ENCODE measurements at regions of chr12 and their contacts with region 1.

Region 1: DNA sequence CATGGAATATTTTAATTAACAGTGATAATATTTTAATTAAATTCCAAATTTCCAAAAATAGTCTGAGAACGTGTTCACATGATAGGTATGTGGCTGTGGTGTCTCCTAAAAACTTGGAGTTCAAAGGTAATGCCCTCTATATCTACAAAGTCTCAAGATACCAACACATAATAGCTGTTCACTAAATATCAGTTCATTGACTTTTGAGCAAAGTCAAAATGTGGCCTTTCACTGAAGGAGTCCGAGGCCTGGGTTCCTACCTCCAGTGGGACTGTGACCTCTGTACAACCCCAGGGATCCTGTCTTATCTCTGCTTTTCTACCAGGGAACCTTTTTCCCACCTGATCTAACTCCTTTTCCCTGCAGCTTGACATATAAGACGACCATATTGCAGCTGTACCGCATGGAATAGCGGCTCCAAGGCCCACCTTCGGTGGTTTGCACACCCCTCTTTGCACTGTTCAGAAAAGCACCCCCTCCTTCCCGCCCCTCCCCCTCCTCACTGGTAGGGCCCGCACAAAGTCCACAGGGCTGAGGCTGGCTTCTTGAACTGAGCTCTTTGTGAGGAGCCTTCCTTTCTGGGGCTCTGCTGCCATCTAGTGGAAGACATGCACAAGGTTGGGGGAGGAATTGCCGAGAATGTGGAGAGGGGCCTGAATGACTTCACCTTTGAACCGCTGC is 3.1 kb downstream of the CCND2 start:
- DNase-seq: peak; percentile 95
- H3K4me3 Mint-ChIP-seq: peak overlapping the region; percentile 99
- H3K27ac Mint-ChIP-seq: peak overlapping the region; percentile 99
- H3K4me1 Mint-ChIP-seq: peaks cover 55% of the 10 kb centered on the region
- H3K27me3 Mint-ChIP-seq: no peaks in the 10 kb centered on the region

Region 2: DNA sequence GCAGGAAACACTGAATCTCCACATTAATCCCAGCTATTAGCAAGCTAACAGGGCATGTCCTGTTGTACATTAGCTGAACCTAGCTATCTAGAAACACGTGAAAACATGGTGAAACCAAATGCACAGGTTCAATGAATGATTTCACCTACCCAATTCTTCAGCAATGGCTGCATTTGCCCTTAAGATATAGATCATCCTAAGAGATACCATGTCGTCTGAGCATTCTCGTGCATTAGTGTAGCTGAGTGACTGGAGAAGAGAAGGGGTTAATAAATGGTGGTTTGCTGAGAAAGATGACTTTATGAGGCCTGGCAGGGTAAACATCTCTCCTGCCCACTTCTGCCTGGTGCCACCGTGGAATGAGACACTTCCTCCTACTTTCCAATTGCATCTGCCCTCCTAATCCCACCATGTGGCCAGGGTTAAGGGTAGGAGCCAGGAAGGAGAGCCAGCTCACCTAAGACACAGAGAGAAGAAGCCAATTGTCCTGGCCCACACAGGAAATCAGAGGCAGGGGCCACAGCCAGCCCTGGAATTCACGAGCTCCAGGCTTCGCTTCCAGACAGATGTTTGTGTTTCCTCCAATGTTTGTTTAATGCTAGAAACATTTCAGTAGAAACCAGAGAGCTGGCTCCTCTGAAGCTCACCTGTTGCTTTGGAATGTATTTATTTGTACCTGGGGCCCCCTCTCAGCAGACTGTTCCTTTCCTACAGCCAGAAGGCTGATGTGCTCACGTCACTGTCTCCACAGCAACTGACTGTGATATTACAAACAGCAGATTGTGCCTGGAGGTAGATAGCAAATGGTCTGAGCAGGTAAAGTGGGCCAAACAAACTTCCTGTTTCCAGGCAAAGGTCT is 277.5 kb before region 1 on chr12:
- CTCF ChIA-PET with region 1: interaction called, 69 read pairs
- intact Hi-C with region 1: loop called (anchors 1 kb)
- DNase-seq: no peak
- H3K4me3 Mint-ChIP-seq: no peak overlapping the region
- H3K27ac Mint-ChIP-seq: no peak overlapping the region
- H3K4me1 Mint-ChIP-seq: peaks cover 5% of the 10 kb centered on the region
- H3K27me3 Mint-ChIP-seq: no peaks in the 10 kb centered on the region

Region 3: DNA sequence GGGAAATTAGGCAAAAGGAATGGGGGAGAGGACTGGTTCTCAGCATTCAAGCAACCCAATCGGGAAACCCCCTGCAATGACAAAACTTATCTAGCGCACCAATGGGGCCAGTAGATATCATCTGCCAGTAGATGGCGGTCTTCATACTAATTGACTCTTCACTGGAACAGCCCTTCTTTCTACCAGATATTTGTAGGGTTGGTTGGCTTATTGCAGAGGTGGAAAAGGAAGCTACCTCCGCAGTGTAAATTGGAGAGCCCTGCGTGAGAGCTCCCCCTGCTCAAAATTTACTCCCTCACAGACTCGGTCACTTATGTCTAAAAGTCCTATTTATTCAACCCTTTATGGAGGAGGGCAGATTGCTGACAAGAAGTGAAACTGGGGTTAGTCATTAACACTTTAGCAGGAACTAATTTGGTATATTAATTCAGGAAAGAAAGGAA is 169.2 kb before region 1 on chr12:
- CTCF ChIA-PET with region 1: interaction called, 38 read pairs
- intact Hi-C with region 1: loop called (anchors 1 kb)
- DNase-seq: peak; percentile 87
- H3K4me3 Mint-ChIP-seq: peak overlapping the region; percentile 48
- H3K27ac Mint-ChIP-seq: peak overlapping the region; percentile 89
- H3K4me1 Mint-ChIP-seq: peaks cover 37% of the 10 kb centered on the region
- H3K27me3 Mint-ChIP-seq: peaks cover 3% of the 10 kb centered on the region

Region 4: DNA sequence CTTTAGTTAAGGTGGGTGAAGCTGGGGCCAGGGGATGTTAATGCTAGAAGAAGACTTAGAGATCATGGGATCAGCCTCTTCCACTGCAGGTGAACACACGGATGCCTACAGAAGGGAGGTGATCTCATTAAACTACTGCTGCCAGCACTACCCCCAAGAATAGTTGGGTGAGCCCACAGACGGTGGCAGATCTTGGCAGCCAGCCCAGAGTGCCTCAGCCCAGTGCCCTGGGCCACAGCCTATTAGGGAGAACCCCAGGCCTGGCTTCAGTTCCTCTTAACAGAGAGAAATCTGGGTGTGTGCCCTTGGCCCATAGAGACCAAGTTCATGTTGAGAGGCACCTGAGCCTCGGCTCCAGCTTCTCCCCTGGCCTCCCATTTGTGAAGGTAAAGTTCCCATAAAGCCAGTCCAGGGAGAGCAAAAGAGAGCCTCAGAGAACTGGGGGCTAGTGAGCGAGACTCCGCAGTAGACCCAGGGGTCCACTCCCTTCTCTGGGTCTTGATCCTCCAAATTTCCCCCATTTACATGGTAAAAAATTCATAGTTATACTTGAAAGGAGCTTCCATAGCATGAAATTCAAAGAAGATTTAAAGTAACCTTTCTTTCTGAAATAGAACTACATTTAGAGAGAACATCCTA is 128.1 kb before region 1 on chr12:
- CTCF ChIA-PET with region 1: interaction called, 55 read pairs
- intact Hi-C with region 1: loop called (anchors 1 kb)
- DNase-seq: peak; percentile 82
- H3K4me3 Mint-ChIP-seq: no peak overlapping the region
- H3K27ac Mint-ChIP-seq: peak overlapping the region; percentile 92
- H3K4me1 Mint-ChIP-seq: peaks cover 89% of the 10 kb centered on the region
- H3K27me3 Mint-ChIP-seq: no peaks in the 10 kb centered on the region

Region 5: DNA sequence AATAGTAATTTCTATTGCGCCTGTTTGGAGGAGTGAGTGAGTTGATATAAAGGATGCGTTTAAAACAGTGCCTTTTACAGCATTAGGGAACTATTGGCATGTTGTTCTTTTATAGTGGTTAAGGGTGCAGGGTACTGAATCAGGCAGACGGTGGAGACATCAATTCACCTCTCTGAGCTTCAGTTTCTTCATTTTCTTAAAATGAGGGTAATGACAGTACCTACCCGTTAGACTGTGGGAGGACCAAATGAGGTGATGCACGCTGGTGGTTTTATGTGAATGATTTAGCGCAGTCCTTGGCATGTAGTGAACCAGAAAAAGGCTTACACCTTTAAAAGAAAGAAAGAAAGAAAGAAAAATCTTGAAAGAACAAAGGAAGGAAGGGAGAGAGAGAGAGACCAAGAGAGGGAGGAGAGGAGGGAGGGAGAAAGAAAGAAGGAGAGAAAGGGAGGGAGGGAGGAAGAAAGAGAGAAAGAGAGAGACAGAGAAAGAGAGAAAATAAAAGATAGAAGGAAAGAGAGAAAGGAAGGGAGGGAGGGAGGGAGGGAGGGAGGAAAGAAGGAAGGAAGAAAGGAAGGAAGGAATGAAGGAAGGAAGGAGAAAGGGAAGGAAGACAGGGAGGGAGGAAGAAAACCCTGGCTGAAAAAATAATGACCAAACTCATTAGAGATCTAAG is 25.3 kb before region 1 on chr12:
- CTCF ChIA-PET with region 1: interaction called, 12 read pairs
- intact Hi-C with region 1: loop called (anchors 1 kb)
- DNase-seq: peak; percentile 69
- H3K4me3 Mint-ChIP-seq: peak overlapping the region; percentile 8
- H3K27ac Mint-ChIP-seq: peak overlapping the region; percentile 74
- H3K4me1 Mint-ChIP-seq: peaks cover 17% of the 10 kb centered on the region
- H3K27me3 Mint-ChIP-seq: no peaks in the 10 kb centered on the region